Right ventricle myocardium superior (tissue), 1 donor: ENCODE measurements at regions of chr5 and their contacts with region 1.

Region 1: GRCh38 chr5:155147222-155147621 is 133.7 kb downstream of the KIF4B start:
- DNase-seq: no peak
- ATAC-seq: no peak

Region 2: GRCh38 chr5:155080721-155081120 is 66.5 kb before region 1 on chr5:
- intact Hi-C with region 1: no loop called
- DNase-seq: no peak
- ATAC-seq: no peak

Region 3: GRCh38 chr5:155728146-155728856 is 581.1 kb after region 1 on chr5:
- intact Hi-C with region 1: loop called (anchors 10 kb)
- DNase-seq: peak; percentile 78
- ATAC-seq: peak; percentile 77